Sciatic nerve (tissue), 2 donors: ENCODE measurements at regions of chr12 and their contacts with region 1.

Region 1: DNA sequence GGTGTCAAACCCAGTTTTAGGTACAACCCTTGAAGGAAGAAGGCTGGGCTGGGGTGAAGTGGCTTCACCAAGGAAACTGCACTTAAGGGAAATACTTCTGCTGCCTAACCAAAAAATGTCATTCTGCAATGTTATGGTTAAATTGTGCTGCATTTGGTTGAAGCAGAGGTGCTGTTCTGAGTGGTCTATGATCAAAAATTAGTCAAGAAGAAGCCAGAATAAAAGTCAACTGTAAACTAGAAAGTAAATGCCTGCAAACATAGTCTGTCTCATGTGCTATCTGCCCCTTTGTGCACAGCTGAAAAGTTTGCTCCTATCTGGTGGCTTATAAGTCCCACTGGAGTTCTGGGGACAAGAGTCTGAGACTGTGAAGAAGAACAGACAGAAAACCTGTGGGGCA is 158.8 kb downstream of the C12orf42 start:
- DNase-seq: no peak
- ATAC-seq: no peak

Region 2: GRCh38 chr12:103257768-103258167 is 79.2 kb before region 1 on chr12:
- intact Hi-C with region 1: no loop called
- DNase-seq: no peak
- ATAC-seq: no peak

Region 3: DNA sequence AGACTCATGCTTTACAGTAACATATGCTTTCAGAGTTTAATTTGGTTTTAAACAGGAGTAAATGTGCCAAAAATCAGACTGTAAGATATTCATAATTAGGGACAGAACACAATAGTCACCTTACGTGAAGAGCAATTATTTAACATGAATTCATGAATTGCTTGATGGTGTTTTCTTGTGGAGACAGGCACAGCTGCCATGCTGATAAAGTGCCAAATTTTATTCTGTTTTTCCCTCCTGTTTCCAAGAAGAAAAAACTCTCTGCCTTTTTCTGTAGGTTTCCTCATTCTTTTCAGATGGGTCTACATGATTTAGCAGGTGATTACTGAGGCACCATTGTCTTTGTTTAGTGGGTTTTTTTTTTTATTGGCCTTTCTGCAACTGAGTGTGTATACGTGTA is 78.7 kb after region 1 on chr12:
- intact Hi-C with region 1: loop called (anchors 2 kb)
- DNase-seq: no peak
- ATAC-seq: no peak